Activated CD4-positive, alpha-beta T cell treated with anti-CD3 and anti-CD28 coated beads, Interleukin-2, amount 10 ng/mL, durations not matched to agents 7 days and 5 days (primary cell): ENCODE measurements at regions of chr19 and their contacts with region 1.

Region 1: DNA sequence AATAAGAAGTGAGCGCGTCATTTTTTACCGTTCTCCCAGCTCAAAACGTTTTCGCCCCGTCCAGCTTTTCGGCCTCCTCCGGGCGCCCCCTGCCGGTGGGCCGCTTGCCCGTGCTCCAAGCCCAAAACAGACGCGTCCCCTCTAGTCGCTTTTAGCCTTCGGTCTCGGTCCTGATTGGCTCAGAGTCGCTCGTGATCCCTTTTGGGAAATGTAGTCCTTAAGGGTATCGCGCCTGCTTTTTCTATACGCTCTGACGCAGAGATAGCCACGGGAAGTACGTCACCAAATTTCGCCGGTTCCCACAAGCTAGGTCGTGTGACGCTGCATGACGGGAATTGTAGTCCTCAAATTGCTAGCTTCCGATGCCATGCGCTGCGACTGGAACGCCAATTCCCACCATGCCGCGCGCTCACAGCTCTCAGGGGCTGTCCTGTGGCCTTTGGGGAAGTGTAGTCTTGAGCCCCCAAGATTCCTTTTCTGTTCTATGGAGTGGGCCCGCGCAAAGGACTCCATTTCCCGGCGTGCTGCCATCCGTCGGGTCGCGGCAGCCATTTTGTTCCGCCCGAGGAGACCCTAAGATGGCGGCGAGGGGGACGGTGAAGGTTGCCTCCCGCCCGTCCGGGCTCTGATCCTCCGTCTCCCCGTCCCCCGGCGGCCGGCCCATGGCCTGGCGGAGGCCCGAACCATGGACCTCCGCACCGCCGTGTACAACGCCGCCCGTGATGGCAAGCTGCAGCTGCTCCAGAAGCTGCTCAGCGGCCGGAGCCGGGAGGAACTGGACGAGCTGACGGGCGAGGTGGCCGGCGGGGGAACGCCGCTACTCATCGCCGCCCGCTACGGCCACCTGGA is at the start of gene FEM1A:
- DNase-seq: peak; percentile 99
- H3K4me3 Mint-ChIP-seq: peak within 1 kb of the TSS; percentile 76
- H3K27ac Mint-ChIP-seq: peak within 1 kb of the TSS; percentile 87
- H3K4me1 Mint-ChIP-seq: peaks cover 33% of the 10 kb centered on the region
- H3K27me3 Mint-ChIP-seq: no peaks in the 10 kb centered on the region
- total RNA-seq, gene FEM1A: 11.9 TPM

Region 2: GRCh38 chr19:4707956-4708650 is 83.3 kb before region 1 on chr19:
- CTCF ChIA-PET with region 1: no interaction called
- POLR2A ChIA-PET with region 1: no interaction called
- DNase-seq: no peak
- H3K4me3 Mint-ChIP-seq: no peak overlapping the region
- H3K27ac Mint-ChIP-seq: no peak overlapping the region
- H3K4me1 Mint-ChIP-seq: peaks cover 13% of the 10 kb centered on the region
- H3K27me3 Mint-ChIP-seq: no peaks in the 10 kb centered on the region

Region 3: GRCh38 chr19:4723367-4724187 is 67.8 kb before region 1 on chr19 and contains the start of gene DPP9:
- CTCF ChIA-PET with region 1: interaction called, 105 read pairs
- POLR2A ChIA-PET with region 1: interaction called, 3 read pairs
- DNase-seq: peak; percentile 97
- H3K4me3 Mint-ChIP-seq: peak within 1 kb of the TSS; percentile 100
- H3K27ac Mint-ChIP-seq: peak within 1 kb of the TSS; percentile 93
- H3K4me1 Mint-ChIP-seq: peaks cover 28% of the 10 kb centered on the region
- H3K27me3 Mint-ChIP-seq: peaks cover 9% of the 10 kb centered on the region
- total RNA-seq, gene DPP9: 70.5 to 79.3 TPM

Region 4: GRCh38 chr19:4759388-4760284 is 31.8 kb before region 1 on chr19:
- CTCF ChIA-PET with region 1: interaction called, 12 read pairs
- POLR2A ChIA-PET with region 1: no interaction called
- DNase-seq: peak; percentile 58
- H3K4me3 Mint-ChIP-seq: no peak overlapping the region
- H3K27ac Mint-ChIP-seq: no peak overlapping the region
- H3K4me1 Mint-ChIP-seq: peaks cover 4% of the 10 kb centered on the region
- H3K27me3 Mint-ChIP-seq: peaks cover 26% of the 10 kb centered on the region

Region 5: DNA sequence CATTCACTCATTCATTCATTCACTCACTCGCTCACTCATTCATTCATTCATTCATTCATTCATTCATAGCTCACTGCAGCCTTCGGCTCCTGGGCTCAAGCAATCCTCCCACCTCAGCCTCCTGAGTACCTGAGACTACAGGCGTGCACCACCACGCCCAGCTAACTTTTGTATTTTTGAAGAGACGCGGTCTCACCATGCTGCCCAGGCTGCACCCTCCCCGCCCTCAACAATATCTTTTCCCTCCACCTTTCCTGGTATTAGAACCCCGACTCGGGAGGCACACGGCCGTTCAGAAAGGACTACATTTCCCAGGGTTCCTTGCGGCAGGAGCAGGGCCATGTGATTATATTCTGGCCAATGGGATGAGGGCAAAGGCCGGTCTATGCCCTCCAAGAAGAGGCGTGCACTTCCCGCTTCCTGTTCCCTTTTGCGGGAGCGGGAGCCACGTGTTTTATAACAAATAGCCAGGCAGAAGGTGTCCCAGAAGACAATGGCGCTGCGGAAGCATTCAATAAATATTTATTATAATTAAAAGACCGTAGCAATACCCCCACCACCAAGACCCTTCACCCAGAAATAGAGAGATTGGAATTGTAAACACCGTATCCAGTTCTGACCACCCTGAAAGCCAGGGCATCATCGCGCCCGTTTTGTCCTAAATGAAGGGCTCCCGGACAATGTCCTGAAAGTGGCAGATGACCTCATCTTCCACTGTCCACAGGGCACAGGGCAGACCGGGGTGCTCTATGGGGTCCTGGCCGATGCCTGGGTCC is 24.2 kb after region 1 on chr19:
- CTCF ChIA-PET with region 1: interaction called, 46 read pairs
- POLR2A ChIA-PET with region 1: no interaction called
- DNase-seq: peak; percentile 84
- H3K4me3 Mint-ChIP-seq: peak overlapping the region; percentile 49
- H3K27ac Mint-ChIP-seq: peak overlapping the region; percentile 76
- H3K4me1 Mint-ChIP-seq: peaks cover 29% of the 10 kb centered on the region
- H3K27me3 Mint-ChIP-seq: no peaks in the 10 kb centered on the region

Region 6: DNA sequence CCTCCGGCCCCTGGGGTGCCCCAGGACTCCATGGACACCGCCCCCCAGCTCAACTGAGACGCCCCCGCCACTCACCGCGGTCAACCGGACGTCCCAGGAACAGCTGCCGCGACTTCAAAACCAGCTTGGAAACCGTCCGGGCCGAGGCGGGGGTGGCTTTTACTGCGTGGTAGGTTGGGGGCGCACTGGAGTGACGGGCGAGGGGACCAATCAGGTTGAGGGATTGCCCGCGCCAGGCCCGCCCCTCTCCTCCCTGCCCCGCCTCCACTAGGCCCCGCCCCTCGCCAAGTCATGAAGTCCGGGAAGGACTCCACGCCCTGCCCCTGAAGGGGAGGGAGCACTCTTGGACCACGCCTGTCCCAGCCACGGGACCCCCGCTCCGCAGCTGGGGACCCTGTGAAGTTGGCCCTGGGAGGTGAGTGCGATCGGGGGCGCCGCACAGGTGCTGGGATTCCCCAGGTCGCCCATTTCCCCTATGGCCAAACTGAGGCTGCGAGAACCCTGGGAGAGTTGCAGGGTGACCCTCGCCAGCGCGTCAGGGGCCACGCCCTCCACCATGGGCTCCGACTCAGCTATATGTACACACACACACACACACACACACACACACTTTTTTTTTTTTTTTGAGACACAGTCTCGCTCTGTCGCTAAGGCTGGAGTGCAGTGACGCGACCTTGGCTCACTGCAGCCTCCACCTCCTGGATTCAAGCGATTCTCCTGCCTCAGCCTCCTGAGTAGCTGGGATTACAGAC is 76.3 kb after region 1 on chr19 and contains the start of gene PLIN3:
- CTCF ChIA-PET with region 1: interaction called, 12 read pairs
- POLR2A ChIA-PET with region 1: no interaction called
- DNase-seq: peak; percentile 92
- H3K4me3 Mint-ChIP-seq: peak within 1 kb of the TSS; percentile 75
- H3K27ac Mint-ChIP-seq: peak within 1 kb of the TSS; percentile 72
- H3K4me1 Mint-ChIP-seq: peaks cover 22% of the 10 kb centered on the region
- H3K27me3 Mint-ChIP-seq: peaks cover 6% of the 10 kb centered on the region
- total RNA-seq, gene PLIN3: 24.1 to 28.1 TPM